A673 (cell line): ENCODE measurements at regions of chr2 and their contacts with region 1.

Region 1: GRCh38 chr2:46000660-46001059 is 296.5 kb upstream of the EPAS1 start:
- DNase-seq: no peak
- H3K4me3 ChIP-seq: no peak overlapping the region
- H3K27ac ChIP-seq: no peak overlapping the region
- H3K4me1 ChIP-seq: no peaks in the 10 kb centered on the region
- H3K27me3 ChIP-seq: no peaks in the 10 kb centered on the region
- CTCF ChIP-seq: no peak

Region 2: DNA sequence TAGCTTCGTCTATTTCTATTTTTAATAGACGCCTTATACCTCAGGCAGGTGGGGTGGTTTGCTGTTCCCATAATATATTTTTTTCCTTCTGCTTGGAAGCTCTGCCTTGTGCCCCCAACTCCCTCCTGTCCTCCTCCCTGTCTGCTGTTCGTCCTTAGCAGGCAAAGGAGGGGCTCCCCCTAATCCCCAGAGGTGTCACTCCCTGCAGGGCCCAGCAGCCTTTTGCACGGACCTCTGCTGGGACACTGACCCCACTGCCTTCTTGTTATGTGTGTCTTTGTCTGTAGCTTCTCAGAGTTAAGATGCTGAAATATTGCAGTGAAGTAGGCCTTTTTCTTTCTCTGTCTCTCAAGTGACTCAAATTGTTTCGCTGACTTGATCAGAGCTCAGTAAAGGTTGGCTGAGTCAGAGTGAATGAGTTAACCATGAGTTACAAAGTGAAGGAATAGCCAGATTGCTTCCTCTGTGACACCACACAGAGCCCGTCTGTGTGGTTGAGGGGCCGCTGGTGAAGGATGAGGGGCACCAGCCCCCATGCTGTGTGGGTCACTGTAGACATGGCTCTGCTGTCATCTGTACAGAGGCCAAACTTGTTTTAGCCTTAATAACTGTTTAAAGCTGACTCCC is 301.5 kb before region 1 on chr2:
- CTCF ChIA-PET with region 1: no interaction called
- POLR2A ChIA-PET with region 1: no interaction called
- intact Hi-C with region 1: no loop called
- DNase-seq: no peak
- H3K4me3 ChIP-seq: no peak overlapping the region
- H3K27ac ChIP-seq: no peak overlapping the region
- H3K4me1 ChIP-seq: no peaks in the 10 kb centered on the region
- H3K27me3 ChIP-seq: peaks cover 6% of the 10 kb centered on the region
- CTCF ChIP-seq: no peak

Region 3: GRCh38 chr2:46162329-46163097 is 161.9 kb after region 1 on chr2:
- CTCF ChIA-PET with region 1: no interaction called
- POLR2A ChIA-PET with region 1: no interaction called
- intact Hi-C with region 1: no loop called
- DNase-seq: no peak
- H3K4me3 ChIP-seq: no peak overlapping the region
- H3K27ac ChIP-seq: no peak overlapping the region
- H3K4me1 ChIP-seq: no peaks in the 10 kb centered on the region
- H3K27me3 ChIP-seq: no peaks in the 10 kb centered on the region
- CTCF ChIP-seq: no peak

Region 4: DNA sequence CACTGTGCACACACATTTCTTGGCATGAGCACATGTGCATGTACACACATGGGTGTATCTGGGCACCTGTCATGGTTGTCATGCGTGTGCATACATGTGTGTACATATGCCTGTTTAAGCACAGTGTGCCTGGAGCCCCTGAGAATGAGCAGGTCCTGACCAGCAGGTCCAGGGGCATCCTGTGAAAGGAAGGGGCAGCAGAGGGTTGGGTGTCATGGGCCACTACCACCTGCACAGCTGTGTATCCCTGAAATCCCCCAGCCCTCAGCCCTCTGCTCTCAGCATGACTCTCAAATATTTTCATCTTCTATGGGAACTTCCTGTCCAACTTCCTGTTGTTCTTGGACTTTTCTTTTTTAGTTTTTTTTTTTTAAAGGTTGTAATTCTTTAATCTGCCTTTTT is 199.6 kb after region 1 on chr2:
- CTCF ChIA-PET with region 1: no interaction called
- POLR2A ChIA-PET with region 1: interaction called, 13 read pairs
- intact Hi-C with region 1: no loop called
- DNase-seq: no peak
- H3K4me3 ChIP-seq: no peak overlapping the region
- H3K27ac ChIP-seq: no peak overlapping the region
- H3K4me1 ChIP-seq: no peaks in the 10 kb centered on the region
- H3K27me3 ChIP-seq: no peaks in the 10 kb centered on the region
- CTCF ChIP-seq: no peak

Region 5: DNA sequence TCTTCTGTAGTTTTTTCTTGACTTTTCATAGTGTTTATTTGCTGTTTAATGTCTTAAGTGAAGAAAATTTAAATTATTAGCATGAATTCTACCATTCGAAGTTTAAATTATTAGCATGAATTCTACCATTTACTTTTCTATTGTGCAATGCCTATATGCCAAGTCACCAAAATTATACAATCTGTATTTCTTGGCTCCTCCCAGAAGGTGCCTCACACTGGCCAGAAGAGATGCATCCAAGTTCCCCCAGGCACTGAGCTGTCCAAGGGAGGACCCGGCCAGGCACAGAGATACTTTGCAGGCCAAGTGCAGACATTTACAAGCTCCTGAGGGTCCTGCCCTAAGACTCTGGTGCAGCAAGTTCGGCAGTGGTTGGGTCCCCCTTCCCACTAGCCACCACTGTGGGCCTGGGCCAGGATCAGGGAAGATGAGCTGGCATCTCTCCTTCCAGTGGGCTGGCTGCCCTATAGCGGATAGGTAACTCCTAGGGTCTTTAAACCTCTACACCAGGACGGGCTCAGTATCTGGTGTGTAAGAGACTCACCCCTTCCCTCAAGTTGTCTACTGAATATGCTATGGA is 510.0 kb after region 1 on chr2:
- CTCF ChIA-PET with region 1: no interaction called
- POLR2A ChIA-PET with region 1: no interaction called
- intact Hi-C with region 1: no loop called
- DNase-seq: no peak
- H3K4me3 ChIP-seq: no peak overlapping the region
- H3K27ac ChIP-seq: no peak overlapping the region
- H3K4me1 ChIP-seq: no peaks in the 10 kb centered on the region
- H3K27me3 ChIP-seq: no peaks in the 10 kb centered on the region
- CTCF ChIP-seq: no peak